ENCODE measurements at regions of chr7 and their contacts with region 1.

Region 1: DNA sequence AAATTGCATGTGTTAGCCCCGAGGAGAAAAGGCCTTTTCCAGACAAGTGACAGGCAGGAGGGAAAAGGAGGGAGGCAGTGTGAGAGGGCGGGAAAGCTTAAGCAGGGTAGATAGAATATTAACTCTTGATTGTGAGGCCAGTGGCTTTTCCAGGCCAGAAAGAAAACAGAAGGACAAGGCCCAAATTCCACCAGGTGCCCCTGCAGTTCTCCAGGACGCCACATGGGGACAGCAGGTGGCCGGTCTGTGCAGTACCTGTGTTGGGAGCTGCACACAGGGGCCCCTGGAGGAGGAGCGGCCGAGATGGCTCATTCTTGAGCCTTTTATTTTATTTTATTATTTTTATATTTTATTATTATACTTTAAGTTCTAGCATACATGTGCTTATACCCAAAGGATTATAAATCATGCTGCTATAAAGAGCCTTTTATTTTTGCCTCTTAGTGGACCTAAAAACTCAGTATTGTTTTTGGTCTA is 141.3 kb upstream of the KLF14 start:
- DNase-seq: peak; percentile 71
- H3K4me3 ChIP-seq: no peak overlapping the region
- H3K27ac ChIP-seq: peak overlapping the region; percentile 5 to 100; a peak in 3 of 4 replicates
- H3K4me1 ChIP-seq: peaks cover 7 to 41% of the 10 kb centered on the region in 2 experiments
- H3K27me3 ChIP-seq: no peaks in the 10 kb centered on the region
- CTCF ChIP-seq: peak; percentile 80
- EP300 ChIP-seq: no peak
- RAD21 ChIP-seq: peak; percentile 68

Region 2: GRCh38 chr7:130891254-130892094 is 16.2 kb after region 1 on chr7:
- CTCF ChIA-PET with region 1: interaction called, 136 read pairs
- POLR2A ChIA-PET with region 1: no interaction called
- DNase-seq: no peak
- H3K4me3 ChIP-seq: peak overlapping the region in 1 of 2 experiments; percentile 17; a peak in 2 of 4 replicates
- H3K27ac ChIP-seq: peak overlapping the region; percentile 82 to 100
- H3K4me1 ChIP-seq: peaks cover 17 to 81% of the 10 kb centered on the region in 2 experiments
- H3K27me3 ChIP-seq: no peaks in the 10 kb centered on the region
- CTCF ChIP-seq: no peak
- EP300 ChIP-seq: peak in 1 of 2 experiments; percentile 83; a peak in 2 of 4 replicates
- RAD21 ChIP-seq: no peak